ENCODE measurements at regions of chr17 and their contacts with region 1.

Region 1: DNA sequence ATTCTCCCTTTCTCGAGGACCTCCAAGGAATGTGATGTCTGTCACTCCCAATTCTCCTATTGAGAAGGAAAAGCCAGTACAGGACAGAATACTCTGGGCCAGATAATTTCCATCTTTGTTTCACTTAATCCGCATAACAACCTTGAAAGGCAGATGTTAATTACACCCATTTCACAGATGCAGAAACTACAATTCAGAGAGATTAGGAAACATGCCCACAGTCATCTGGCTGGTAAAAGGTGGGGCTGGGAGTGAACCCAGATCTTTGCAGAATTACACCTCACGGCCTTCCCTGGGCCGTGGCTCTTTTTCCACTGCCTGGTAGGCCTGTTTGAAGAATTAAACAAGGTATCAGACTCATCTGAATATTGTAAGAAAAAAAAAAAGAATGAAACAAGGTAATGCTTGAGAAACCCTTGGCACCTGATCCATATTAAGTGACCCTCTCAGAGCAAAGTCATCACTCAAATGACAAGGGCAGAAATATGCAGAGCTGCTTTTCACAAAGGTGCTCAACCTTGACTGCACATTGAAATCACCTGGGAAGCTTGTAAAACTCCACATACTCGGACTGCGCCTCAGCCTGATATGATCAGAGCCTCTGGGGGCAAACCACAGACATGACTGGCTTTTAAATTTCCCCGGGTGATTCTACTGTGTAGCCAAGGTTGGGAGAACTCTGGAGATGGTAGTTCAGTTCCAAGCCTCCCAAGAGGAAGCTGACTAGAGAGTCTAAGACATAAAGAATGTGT is 16.6 kb upstream of the G6PC1 start:
- DNase-seq: no peak
- H3K4me3 ChIP-seq: no peak overlapping the region
- H3K27ac ChIP-seq: no peak overlapping the region
- H3K4me1 ChIP-seq: no peaks in the 10 kb centered on the region
- H3K27me3 ChIP-seq: peaks cover 0 to 2% of the 10 kb centered on the region in 2 experiments
- CTCF ChIP-seq: no peak
- POLR2A ChIP-seq: no peak

Region 2: DNA sequence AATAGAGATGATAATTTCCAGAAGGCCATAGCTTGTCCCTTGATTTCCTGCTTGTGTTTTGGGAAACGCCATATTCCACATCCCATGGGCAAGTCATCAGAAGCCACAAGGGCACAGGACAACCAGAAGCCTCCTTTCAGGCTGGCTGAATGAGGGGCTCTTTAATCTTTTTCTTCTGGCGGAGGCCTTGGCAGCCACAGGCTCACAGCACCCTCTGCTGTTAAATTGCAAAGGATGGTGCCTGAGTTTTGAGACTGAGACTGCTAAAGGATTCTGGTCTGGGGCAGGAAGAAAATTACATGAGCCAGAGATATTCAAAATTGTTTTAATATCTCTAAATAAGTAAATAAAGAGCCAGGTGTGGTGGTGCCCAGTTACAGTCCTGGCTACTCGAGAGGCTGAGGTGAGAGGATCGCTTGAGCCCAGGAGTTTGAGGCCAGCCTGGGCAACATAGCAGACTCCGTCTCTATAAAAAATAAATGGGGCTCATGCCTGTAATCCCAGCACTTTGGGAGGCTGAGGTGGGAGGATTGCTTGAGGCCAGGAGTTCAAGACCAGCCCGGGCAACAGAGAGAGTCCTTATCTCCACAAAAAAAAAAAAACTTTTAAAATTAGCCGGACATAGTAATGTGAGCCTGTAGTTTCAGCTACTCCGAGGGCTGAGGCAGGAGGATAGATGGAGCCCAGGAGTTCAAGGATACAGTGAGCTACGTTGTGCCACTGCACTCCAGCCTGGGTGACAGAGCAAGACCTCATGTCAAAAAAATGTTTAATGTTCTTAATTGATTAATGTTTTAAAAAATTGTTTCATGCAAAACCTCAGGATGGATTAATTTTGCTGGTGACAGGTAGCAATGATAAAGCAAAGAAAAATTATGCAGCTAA is 54.0 kb after region 1 on chr17:
- CTCF ChIA-PET with region 1: interaction called, 3 read pairs
- POLR2A ChIA-PET with region 1: no interaction called
- dilution Hi-C with region 1: no loop called
- intact Hi-C with region 1: loop called (anchors 5 kb)
- DNase-seq: peak; percentile 65
- H3K4me3 ChIP-seq: no peak overlapping the region
- H3K27ac ChIP-seq: no peak overlapping the region
- H3K4me1 ChIP-seq: no peaks in the 10 kb centered on the region
- H3K27me3 ChIP-seq: peaks cover 0 to 2% of the 10 kb centered on the region in 2 experiments
- CTCF ChIP-seq: peak; percentile 62 to 69
- POLR2A ChIP-seq: no peak

Region 3: DNA sequence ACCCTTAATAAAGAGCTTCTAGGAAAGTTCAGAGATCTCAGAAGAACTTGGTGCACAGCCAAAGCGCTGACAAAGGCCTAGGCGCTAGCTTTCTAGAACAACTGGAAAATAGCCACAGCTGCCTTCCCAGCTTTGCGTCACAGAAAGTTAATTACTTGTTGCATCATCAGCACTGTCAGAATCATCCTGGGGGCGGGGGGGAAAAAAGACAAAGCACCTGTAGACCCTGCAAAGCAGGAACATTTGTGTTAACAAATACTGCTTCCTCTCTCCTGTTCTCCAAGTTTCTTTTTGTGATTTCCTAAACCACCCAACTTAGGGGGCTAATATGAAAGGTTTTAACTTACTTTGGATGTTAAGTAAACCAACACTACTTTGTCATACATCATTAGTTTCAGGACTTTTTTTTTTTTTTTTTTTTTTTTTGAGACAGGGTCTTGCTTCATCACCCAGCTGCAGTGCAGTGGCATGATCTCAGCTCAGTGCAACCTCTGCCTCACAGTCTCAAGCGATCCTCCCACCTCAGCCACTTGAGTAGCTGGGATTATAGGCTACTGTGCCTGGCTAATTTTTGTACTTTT is 85.1 kb after region 1 on chr17:
- CTCF ChIA-PET with region 1: no interaction called
- POLR2A ChIA-PET with region 1: no interaction called
- dilution Hi-C with region 1: no loop called
- intact Hi-C with region 1: no loop called
- DNase-seq: no peak
- H3K4me3 ChIP-seq: no peak overlapping the region
- H3K27ac ChIP-seq: no peak overlapping the region
- H3K4me1 ChIP-seq: no peaks in the 10 kb centered on the region
- H3K27me3 ChIP-seq: peaks cover 2% of the 10 kb centered on the region in 2 experiments
- CTCF ChIP-seq: no peak
- POLR2A ChIP-seq: no peak

Region 4: DNA sequence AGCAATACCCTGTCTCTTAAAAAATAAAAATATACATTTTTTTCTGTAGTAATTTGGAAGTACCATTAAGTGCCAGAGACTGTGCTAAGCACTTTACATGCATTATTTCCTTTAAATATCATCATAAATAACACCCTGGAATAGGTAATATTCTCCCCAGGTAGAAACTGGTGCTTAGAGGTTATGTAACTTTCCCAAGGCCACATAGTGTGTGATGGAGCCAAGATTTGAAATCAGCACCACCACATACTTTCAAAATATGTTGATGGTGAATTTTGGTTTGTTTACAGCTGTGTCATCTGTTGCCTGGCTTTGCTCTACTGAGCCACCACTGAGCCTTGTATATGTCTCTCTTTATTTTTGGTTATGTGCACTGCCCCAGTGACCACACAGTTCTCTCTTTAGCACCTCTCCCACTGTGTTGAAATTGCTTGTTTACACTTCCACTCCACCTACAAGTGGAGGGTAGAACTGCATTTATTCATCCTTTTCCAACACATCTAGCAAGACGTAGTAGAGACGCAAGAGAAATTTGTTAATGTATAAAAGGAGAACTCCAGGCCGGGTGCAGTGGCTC is 268.0 kb after region 1 on chr17:
- CTCF ChIA-PET with region 1: no interaction called
- POLR2A ChIA-PET with region 1: no interaction called
- dilution Hi-C with region 1: no loop called
- intact Hi-C with region 1: no loop called
- DNase-seq: no peak
- H3K4me3 ChIP-seq: no peak overlapping the region
- H3K27ac ChIP-seq: no peak overlapping the region
- H3K4me1 ChIP-seq: no peaks in the 10 kb centered on the region
- H3K27me3 ChIP-seq: no peaks in the 10 kb centered on the region
- CTCF ChIP-seq: no peak
- POLR2A ChIP-seq: no peak